ENCODE measurements at regions of chr14 and their contacts with region 1.

Region 1: GRCh38 chr14:49879683-49880204 is 13.1 kb upstream of the ARF6 start:
- DNase-seq: peak in 1 of 5 donors; percentile 27
- ATAC-seq: peak in 3 of 4 donors; percentile 71 to 81 (median 72)
- H3K4me3 ChIP-seq: no peak overlapping the region
- H3K27ac ChIP-seq: peak overlapping the region in 1 of 12 donors; percentile 62
- H3K4me1 ChIP-seq: peaks cover 0 to 36% (median 0%) of the 10 kb centered on the region in 12 donors
- H3K27me3 ChIP-seq: no peaks in the 10 kb centered on the region
- CTCF ChIP-seq: peak; percentile 50 to 70 (median 54)
- POLR2A ChIP-seq: no peak

Region 2: DNA sequence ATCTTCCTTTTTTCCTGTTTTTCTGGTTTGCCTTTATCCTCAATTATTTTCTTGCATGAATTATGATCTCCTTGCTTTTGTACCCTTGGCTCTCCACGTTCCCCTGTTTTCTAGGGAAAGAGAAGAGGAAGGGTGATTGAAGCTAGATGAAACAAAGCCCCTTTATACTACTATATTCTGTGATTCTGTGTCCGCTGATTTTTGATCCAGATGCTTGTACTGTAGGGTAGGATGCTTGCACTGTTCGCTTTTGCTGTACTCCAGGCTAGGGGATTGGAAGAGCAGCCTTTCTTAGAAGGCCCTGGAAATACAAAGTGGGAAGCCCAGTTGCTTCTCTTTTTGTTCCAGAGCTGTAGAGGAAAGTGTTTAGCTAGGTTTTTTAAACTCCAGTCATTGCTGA is 146.8 kb before region 1 on chr14:
- intact Hi-C with region 1: no loop called
- DNase-seq: no peak
- ATAC-seq: no peak
- H3K4me3 ChIP-seq: no peak overlapping the region
- H3K27ac ChIP-seq: no peak overlapping the region
- H3K4me1 ChIP-seq: no peaks in the 10 kb centered on the region
- H3K27me3 ChIP-seq: no peaks in the 10 kb centered on the region
- CTCF ChIP-seq: no peak
- POLR2A ChIP-seq: no peak

Region 3: GRCh38 chr14:49862089-49862673 is 17.6 kb before region 1 on chr14:
- intact Hi-C with region 1: no loop called
- DNase-seq: peak; percentile 79 to 87 (median 86)
- ATAC-seq: peak; percentile 33 to 60 (median 51)
- H3K4me3 ChIP-seq: peak overlapping the region; percentile 26 to 91 (median 70)
- H3K27ac ChIP-seq: peak overlapping the region; percentile 97 to 99 (median 98)
- H3K4me1 ChIP-seq: peaks cover 0 to 47% (median 12%) of the 10 kb centered on the region in 12 donors
- H3K27me3 ChIP-seq: no peaks in the 10 kb centered on the region
- CTCF ChIP-seq: peak; percentile 99 to 100 (median 100)
- POLR2A ChIP-seq: no peak

Region 4: DNA sequence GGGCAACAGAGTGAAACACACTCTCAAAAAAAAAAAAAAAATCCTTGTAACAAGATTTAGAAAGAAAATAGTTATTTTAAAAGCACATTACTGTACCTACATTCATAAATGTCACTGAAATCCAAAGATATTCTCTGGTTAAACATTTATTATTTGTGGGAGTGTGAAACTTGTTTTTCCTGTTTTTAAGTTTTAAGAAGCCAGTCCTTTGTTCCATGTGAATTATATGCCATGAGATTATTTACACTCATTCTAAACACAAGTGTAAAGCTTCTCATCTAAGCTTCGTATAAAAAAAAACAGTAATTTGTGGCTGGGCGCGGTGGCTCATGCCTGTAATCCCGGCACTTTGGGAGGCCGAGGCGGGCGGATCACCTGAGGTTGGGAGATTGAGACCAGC is 221.7 kb after region 1 on chr14:
- intact Hi-C with region 1: loop called in 4 of 10 experiments (anchors 5 kb)
- DNase-seq: no peak
- ATAC-seq: no peak
- H3K4me3 ChIP-seq: no peak overlapping the region
- H3K27ac ChIP-seq: no peak overlapping the region
- H3K4me1 ChIP-seq: peaks cover 0 to 8% (median 2%) of the 10 kb centered on the region in 12 donors
- H3K27me3 ChIP-seq: no peaks in the 10 kb centered on the region
- CTCF ChIP-seq: no peak
- POLR2A ChIP-seq: no peak

Measured in heart left ventricle (tissue), 16 donors.